OCI-LY7 (cell line): ENCODE measurements at regions of chr11 and their contacts with region 1.

Region 1: GRCh38 chr11:65540297-65541092 is 15.6 kb downstream of the SCYL1 start:
- DNase-seq: peak; percentile 92
- H3K4me3 ChIP-seq: peak overlapping the region; percentile 71
- H3K27ac ChIP-seq: peak overlapping the region; percentile 61
- H3K4me1 ChIP-seq: peaks cover 23% of the 10 kb centered on the region
- CTCF ChIP-seq: peak; percentile 90

Region 2: DNA sequence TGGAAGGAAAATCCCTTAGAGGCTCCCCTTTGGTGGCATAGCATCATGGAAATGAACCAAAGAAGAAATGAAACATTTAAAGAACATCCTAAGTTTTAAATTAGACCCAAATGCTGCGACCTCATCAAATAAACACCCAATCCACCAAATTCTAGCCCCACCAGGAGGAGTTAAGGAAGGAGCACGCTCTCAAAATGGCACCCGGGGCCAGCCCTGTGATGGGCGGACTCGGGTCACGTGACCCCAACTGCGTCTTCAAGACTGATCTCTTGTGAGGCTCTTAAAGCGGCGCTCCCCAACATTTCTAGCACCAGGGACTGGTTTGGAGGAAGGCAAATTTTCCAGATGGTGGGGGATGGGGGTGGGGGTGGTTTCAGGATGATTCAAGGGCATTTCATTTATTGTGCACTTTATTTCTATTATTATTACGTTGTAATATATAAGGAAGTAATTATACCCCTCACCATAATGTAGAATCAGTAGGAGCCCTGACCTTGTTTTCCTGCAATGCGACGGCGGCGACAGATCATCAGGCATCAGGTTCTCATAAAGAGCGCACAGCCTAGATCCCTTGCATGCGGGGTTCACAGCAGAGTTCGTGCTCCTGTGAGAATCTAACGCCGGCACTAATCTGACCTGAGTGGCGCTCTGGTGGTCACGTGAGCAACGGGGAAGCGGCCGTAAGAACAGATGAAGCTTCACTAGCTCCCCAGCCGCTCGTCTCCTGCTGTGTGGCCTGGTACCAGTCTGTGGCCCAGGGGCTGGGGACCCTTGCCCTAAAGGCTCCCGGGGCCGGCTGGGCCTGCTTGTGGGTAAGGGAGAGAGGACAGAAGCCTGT is 1040.1 kb before region 1 on chr11:
- CTCF ChIA-PET with region 1: no interaction called
- POLR2A ChIA-PET with region 1: no interaction called
- intact Hi-C with region 1: no loop called
- DNase-seq: no peak
- H3K4me3 ChIP-seq: no peak overlapping the region
- H3K27ac ChIP-seq: no peak overlapping the region
- H3K4me1 ChIP-seq: no peaks in the 10 kb centered on the region
- CTCF ChIP-seq: no peak

Region 3: DNA sequence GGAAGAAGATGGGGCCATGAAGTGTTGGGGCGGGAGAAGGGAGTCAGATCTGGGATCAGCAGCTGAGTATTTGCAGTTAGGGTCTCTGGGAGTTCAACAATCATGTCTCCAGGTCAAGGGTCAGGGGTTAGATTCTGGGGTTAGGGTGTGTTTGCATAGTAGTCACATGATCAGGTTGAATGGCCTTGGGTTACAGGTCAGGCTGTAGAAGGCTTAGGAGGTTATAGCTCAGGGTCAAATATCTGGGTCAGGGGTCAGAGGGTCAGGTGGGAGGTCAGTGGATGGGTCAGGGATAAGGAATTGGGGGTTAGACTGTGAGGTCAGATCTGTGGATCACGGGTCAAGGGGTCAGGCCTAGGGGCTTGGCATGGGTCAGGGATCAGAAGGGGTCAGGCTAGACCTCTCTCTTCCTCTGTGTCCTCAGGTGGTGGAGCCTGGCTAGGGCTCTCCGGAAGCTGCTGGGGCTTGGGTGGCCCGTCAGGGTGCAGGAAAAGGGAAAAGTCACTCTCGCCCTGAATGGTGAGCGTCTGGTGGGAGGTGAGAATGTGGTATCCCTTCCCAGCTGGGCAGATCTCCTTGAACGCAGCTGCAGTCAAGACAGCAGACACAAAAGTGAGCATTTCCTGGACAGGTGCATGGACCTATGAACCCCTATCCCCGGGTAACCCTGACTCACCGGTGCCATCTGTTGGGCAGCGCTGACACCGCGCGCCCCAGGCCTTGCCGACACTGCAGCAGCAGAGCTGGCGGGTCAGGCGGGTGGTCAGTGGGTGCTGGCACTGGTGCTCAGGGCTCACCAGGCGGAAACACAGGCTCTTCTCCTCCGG is 11.3 kb after region 1 on chr11:
- CTCF ChIA-PET with region 1: interaction called, 4 read pairs
- POLR2A ChIA-PET with region 1: interaction called, 3 read pairs
- intact Hi-C with region 1: loop called (anchors 1 kb)
- DNase-seq: peak; percentile 91
- H3K4me3 ChIP-seq: no peak overlapping the region
- H3K27ac ChIP-seq: peak overlapping the region; percentile 56
- H3K4me1 ChIP-seq: peaks cover 51% of the 10 kb centered on the region
- CTCF ChIP-seq: peak; percentile 82

Region 4: GRCh38 chr11:65588199-65589054 is 47.9 kb after region 1 on chr11:
- CTCF ChIA-PET with region 1: interaction called, 5 read pairs
- POLR2A ChIA-PET with region 1: interaction called, 3 read pairs
- intact Hi-C with region 1: loop called (anchors 1 kb)
- DNase-seq: peak; percentile 84
- H3K4me3 ChIP-seq: peak overlapping the region; percentile 37
- H3K27ac ChIP-seq: peak overlapping the region; percentile 74
- H3K4me1 ChIP-seq: peaks cover 36% of the 10 kb centered on the region
- CTCF ChIP-seq: peak; percentile 83

Region 5: GRCh38 chr11:65593518-65594298 is 53.2 kb after region 1 on chr11:
- CTCF ChIA-PET with region 1: interaction called, 5 read pairs
- POLR2A ChIA-PET with region 1: no interaction called
- intact Hi-C with region 1: loop called (anchors 1 kb)
- DNase-seq: peak; percentile 53
- H3K4me3 ChIP-seq: no peak overlapping the region
- H3K27ac ChIP-seq: no peak overlapping the region
- H3K4me1 ChIP-seq: peaks cover 13% of the 10 kb centered on the region
- CTCF ChIP-seq: peak; percentile 79

Region 6: DNA sequence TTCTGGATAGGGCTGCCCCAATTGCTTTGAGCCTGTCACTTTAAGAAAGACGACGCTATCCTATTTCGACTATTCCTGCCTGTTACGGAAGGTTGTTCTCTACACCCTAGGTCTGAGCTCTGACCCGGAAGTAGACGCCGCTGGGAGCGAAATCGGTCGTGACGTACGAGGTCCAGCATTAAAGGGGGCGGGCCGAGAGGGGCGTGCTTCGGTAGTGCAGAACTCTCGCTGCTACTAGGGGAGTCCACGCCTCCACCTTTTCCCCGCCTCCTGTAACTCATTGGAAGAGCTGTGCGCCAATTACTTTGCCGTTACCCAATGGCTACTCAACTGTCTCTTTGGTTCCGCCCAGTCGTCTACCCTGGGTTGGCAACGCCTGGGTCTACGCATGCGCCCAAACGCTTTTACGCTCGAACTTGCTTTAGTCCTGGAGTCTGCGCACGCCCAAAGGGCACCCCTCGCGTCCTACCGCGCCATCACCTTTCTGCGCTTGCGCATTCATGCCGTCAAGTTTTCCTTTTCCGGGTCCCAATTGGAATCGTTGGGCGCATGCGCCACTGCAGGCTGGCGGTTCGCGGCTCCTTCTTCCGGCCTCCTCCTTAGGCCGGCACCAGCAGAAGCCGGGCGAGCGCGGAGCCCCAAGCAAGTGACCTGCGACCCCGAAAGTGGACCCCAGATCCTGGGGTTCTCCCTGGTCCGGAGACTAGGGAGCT is 74.9 kb after region 1 on chr11 and contains the start of gene PCNX3:
- CTCF ChIA-PET with region 1: no interaction called
- POLR2A ChIA-PET with region 1: no interaction called
- intact Hi-C with region 1: loop called (anchors 2 kb)
- DNase-seq: peak; percentile 100
- H3K4me3 ChIP-seq: peak within 1 kb of the TSS; percentile 97
- H3K27ac ChIP-seq: peak within 1 kb of the TSS; percentile 75
- H3K4me1 ChIP-seq: peaks cover 48% of the 10 kb centered on the region
- CTCF ChIP-seq: no peak
- total RNA-seq, gene PCNX3: 29.9 and 36.2 TPM in 2 replicates

Region 7: GRCh38 chr11:65633390-65634108 is 93.1 kb after region 1 on chr11:
- CTCF ChIA-PET with region 1: no interaction called
- POLR2A ChIA-PET with region 1: no interaction called
- intact Hi-C with region 1: no loop called
- DNase-seq: no peak
- H3K4me3 ChIP-seq: no peak overlapping the region
- H3K27ac ChIP-seq: no peak overlapping the region
- H3K4me1 ChIP-seq: peaks cover 14% of the 10 kb centered on the region
- CTCF ChIP-seq: no peak

Region 8: GRCh38 chr11:66787912-66788758 is 1247.6 kb after region 1 on chr11:
- CTCF ChIA-PET with region 1: no interaction called
- POLR2A ChIA-PET with region 1: no interaction called
- intact Hi-C with region 1: no loop called
- DNase-seq: no peak
- H3K4me3 ChIP-seq: no peak overlapping the region
- H3K27ac ChIP-seq: no peak overlapping the region
- H3K4me1 ChIP-seq: peaks cover 12% of the 10 kb centered on the region
- CTCF ChIP-seq: no peak